Mammary epithelial cell (primary cell): ENCODE measurements at regions of chr4 and their contacts with region 1.

Region 1: DNA sequence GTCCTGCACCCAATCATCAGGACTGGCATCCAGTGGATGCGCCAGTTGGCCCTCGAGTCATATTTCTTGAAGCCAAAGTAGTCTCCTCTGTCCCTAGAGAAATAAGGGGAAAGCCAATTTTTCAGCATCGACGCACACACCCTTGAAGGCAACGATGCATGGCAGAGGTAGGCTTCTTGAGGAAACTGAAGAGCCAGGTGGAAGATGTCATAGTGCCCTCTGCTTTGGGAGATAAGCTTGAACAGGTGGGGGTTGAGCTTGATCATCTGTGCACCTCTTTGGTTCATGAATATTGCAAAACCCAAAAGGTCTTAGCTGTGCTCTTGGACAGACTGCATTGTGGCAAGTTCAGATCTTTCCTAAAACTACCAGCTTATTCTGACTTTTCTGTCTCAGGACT is 34.6 kb upstream of the WDR1 start:
- DNase-seq: no peak
- H3K4me3 ChIP-seq: no peak overlapping the region
- H3K27ac ChIP-seq: no peak overlapping the region
- H3K4me1 ChIP-seq: no peaks in the 10 kb centered on the region
- H3K27me3 ChIP-seq: no peaks in the 10 kb centered on the region
- CTCF ChIP-seq: no peak

Region 2: DNA sequence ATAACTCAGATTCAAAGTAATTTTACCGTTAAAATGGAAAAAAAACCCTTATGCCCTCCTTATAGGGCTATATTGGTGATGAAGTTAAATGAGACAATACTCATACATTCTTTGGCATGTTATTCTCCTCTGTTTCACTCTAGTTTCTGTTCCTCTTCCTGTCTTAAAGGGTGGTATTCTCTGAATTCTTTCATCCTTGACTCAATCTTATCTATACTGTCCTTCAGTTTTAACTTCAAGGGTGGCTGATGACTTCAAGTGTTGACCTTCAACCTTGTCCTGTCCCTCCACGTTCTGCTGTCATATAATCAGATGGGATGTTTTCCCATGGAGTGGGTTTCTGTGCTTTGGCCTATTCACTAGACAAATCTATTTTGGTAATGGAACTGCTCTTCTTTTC is 262.0 kb after region 1 on chr4:
- CTCF ChIA-PET with region 1: no interaction called
- dilution Hi-C with region 1: loop called (anchors 5 kb)
- in situ Hi-C with region 1: no loop called
- intact Hi-C with region 1: no loop called
- DNase-seq: no peak
- H3K4me3 ChIP-seq: no peak overlapping the region
- H3K27ac ChIP-seq: no peak overlapping the region
- H3K4me1 ChIP-seq: no peaks in the 10 kb centered on the region
- H3K27me3 ChIP-seq: no peaks in the 10 kb centered on the region
- CTCF ChIP-seq: no peak